ENCODE measurements at regions of chr1 and their contacts with region 1.

Region 1: DNA sequence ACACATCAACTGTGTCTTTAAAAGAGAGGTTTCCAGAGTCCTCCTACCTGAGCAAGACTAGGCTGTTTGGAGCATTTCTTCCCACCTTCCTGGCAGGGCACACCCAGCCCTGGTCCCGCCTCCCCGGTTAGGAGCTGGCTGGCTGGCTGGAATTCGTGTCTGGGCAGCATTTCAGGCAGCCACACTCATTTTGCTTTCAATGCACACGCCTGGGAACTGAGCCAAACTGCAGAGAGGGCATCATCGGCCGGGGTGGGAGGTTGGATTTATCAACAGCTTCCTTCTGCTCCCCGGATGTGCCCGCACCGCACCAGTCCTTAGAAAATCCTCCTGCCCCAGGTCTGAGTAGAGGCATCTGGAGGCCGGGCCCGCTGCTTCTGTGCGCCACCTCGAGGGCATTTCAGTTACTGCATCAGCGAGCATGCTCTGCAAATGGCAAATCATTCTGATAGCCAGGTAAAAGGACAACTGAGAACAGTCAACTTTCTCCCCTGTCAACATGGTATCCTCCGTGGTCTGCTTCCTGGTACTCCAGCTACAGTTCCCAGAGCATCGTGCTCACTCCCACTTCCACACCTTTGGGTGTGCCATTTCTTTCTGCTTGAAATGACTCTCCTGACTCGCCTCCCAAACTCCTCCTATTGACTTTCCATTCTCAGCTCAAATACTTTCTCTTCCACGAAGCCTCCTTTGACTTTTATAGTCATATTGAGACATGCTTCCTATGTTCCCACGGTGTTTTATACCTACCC is 20.6 kb downstream of the TCEA3 start:
- DNase-seq: peak; percentile 86 to 94
- ATAC-seq: peak; percentile 97 to 99
- H3K4me3 ChIP-seq: peak overlapping the region; percentile 2; the same call in 2 of the 3 replicates
- H3K27ac ChIP-seq: peak overlapping the region; percentile 68 to 83
- H3K4me1 ChIP-seq: peaks cover 21% of the 10 kb centered on the region
- CTCF ChIP-seq: peak; percentile 78
- EP300 ChIP-seq: no peak; a peak in 1 of 5 replicates
- POLR2A ChIP-seq: no peak
- RAD21 ChIP-seq: peak; percentile 88 to 90

Region 2: DNA sequence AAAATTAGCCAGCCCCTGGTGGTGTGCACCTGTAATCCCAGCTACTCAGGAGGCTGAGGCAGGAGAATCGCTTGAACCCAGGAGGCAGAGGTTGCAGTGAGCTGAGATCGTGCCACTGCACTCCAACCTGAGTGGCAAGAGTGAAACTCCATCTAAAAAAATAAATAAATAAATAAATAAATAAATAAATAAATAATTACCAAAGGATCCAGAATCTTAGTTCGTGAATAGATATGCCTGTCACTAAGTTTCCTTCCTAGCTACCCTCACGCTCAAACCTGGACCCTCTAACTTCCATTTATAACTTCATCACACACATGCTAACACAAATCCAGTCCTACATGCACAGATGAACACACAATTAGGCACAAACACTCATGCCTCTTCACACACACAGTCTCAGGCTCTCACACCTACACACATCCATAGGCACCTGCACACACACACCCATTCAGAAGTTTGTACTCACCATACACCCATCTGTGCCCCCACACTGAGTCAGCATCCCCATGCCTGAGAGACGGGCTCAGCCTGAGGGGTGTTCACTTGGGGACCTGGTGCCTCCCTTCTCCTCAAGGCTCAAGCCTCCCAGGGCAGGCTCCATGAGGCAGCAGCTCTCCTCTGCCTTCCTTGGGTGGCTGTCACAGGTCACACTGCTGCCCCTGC is 492.8 kb before region 1 on chr1:
- CTCF ChIA-PET with region 1: no interaction called
- POLR2A ChIA-PET with region 1: no interaction called
- DNase-seq: no peak
- ATAC-seq: no peak
- H3K4me3 ChIP-seq: no peak overlapping the region
- H3K27ac ChIP-seq: no peak overlapping the region
- H3K4me1 ChIP-seq: no peaks in the 10 kb centered on the region
- CTCF ChIP-seq: no peak
- EP300 ChIP-seq: no peak
- POLR2A ChIP-seq: no peak
- RAD21 ChIP-seq: no peak

Region 3: DNA sequence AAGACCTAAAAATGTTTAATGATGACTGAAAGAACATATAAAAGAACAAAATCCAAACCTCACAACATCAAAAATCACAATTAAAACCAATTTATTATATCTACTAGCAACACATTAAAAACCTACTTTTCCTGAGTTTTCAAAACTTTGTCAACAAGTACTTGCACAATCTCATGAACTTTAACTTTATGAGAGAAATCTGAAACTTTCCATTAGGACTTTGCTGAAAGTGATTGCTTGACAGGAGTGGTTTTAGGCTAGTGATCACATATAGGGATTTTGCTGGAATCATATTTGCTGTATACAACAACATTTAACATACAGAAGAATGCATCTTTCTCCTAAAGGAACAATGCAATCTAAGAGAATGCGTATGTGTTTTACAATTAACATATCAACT is 73.1 kb before region 1 on chr1:
- CTCF ChIA-PET with region 1: interaction called, 13 read pairs
- POLR2A ChIA-PET with region 1: no interaction called
- DNase-seq: no peak
- ATAC-seq: no peak
- H3K4me3 ChIP-seq: no peak overlapping the region
- H3K27ac ChIP-seq: no peak overlapping the region
- H3K4me1 ChIP-seq: peaks cover 22% of the 10 kb centered on the region; the same call in 2 of the 3 replicates
- CTCF ChIP-seq: no peak
- EP300 ChIP-seq: no peak
- POLR2A ChIP-seq: no peak
- RAD21 ChIP-seq: no peak

Region 4: DNA sequence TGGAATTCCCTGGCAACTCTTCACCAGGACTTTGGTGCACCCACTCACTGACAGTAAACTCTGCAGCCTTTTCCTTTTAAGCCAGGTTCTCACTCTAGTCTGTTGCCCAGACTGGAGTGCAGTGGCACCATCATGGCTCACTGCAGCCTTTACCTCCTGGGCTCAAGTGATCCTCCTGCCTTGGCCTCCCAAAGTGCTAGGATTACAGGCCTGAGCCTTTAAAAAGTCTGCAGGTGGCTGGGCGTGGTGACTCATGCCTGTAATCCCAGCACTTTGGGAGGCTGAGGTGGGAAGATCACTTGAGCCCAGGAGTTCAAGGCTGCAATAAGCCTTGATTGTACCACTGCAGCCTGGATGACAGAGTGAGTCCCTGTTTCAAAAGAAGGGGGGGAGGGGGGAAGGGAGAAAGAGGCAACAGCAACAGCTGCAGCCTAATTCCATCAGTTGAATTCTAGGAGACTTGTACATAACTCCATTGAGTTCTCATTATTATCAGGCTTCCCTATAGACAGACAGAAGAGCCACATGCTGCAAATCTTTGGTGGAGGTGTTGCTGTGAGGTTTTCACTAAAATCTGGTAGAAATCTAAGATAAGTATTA is 51.7 kb before region 1 on chr1:
- CTCF ChIA-PET with region 1: interaction called, 11 read pairs
- POLR2A ChIA-PET with region 1: no interaction called
- DNase-seq: no peak
- ATAC-seq: no peak
- H3K4me3 ChIP-seq: no peak overlapping the region
- H3K27ac ChIP-seq: no peak overlapping the region
- H3K4me1 ChIP-seq: no peaks in the 10 kb centered on the region
- CTCF ChIP-seq: no peak
- EP300 ChIP-seq: no peak
- POLR2A ChIP-seq: no peak
- RAD21 ChIP-seq: no peak

Region 5: GRCh38 chr1:23367791-23368561 is 35.9 kb before region 1 on chr1:
- CTCF ChIA-PET with region 1: interaction called, 14 read pairs
- POLR2A ChIA-PET with region 1: interaction called, 6 read pairs
- DNase-seq: peak; percentile 93 to 98
- ATAC-seq: peak; percentile 96
- H3K4me3 ChIP-seq: peak overlapping the region; percentile 87
- H3K27ac ChIP-seq: peak overlapping the region; percentile 98 to 99
- H3K4me1 ChIP-seq: peaks cover 17% of the 10 kb centered on the region
- CTCF ChIP-seq: no peak
- EP300 ChIP-seq: no peak
- POLR2A ChIP-seq: peak; percentile 40
- RAD21 ChIP-seq: no peak

Region 6: DNA sequence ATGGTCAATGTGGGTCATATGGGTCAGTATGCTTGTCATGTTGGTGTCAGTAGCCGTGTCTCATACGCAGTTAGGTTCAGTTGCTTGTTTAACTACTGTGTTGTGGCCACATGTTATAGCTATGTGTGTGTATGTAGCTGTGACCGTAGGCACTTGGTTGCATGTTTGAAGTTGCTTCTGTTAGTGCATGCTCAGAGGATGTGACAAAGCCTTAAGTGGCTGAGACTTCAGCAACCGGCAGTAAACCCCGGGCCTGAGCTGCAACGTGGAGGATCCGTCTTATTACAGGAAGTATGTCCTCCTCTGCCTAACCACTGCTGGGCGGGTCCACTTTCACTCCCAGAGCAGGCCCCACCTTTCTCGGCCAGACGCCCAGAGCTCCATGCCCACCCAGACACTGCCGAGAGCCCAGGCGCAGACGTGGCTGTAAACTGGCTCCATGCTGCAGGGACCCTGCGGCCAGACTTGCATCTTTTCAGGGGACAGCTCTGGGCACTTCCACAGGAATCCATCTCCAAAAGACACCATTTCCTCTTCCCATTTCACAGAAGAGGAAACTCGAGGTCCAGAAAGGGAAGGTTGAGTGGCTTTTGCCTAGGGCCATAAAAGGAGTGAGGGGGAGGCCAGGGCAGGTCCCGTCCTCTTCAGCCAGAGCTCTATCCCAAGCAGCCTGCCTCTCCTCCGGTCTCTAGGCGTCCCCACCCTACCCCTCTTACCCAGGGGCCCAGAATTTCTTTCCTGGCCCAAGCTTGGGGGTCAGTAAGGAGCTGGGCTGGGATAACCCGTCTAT is 18.5 kb after region 1 on chr1:
- CTCF ChIA-PET with region 1: interaction called, 21 read pairs
- POLR2A ChIA-PET with region 1: no interaction called
- DNase-seq: no peak
- ATAC-seq: no peak
- H3K4me3 ChIP-seq: no peak overlapping the region
- H3K27ac ChIP-seq: no peak overlapping the region
- H3K4me1 ChIP-seq: no peaks in the 10 kb centered on the region
- CTCF ChIP-seq: no peak
- EP300 ChIP-seq: no peak
- POLR2A ChIP-seq: no peak
- RAD21 ChIP-seq: no peak